ENCODE measurements at regions of chrX and their contacts with region 1.

Region 1: GRCh38 chrX:11439846-11440245 is 146.6 kb downstream of the AMELX start:
- DNase-seq: no peak
- ATAC-seq: no peak
- H3K4me3 ChIP-seq: no peak overlapping the region
- H3K27ac ChIP-seq: no peak overlapping the region
- H3K4me1 ChIP-seq: no peaks in the 10 kb centered on the region
- H3K27me3 ChIP-seq: no peaks in the 10 kb centered on the region
- CTCF ChIP-seq: no peak
- EP300 ChIP-seq: no peak
- POLR2A ChIP-seq: no peak
- RAD21 ChIP-seq: no peak

Region 2: DNA sequence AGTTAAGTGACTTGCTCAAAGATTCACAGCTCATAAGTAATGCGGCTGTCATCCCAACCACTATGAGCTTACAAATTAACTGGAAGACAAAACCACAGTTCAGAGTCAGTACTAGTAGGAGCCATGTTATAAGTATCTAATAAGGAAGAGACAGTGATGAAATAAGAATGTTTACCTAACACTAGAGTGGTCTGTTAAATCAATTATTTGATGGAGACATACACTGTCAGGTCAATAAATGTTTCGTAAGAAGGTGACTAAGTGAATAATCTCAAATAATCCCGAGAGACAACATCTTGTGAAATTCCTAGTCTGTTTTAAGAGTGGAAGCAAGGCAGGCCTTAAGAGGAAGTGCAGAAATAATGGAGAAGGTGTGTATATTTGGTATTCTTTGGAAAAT is 172.4 kb before region 1 on chrX:
- CTCF ChIA-PET with region 1: no interaction called
- POLR2A ChIA-PET with region 1: no interaction called
- RAD21 ChIA-PET with region 1: no interaction called
- SMC1A ChIA-PET with region 1: no interaction called
- in situ Hi-C with region 1: no loop called
- intact Hi-C with region 1: loop called (anchors 5 kb)
- DNase-seq: no peak
- ATAC-seq: no peak
- H3K4me3 ChIP-seq: no peak overlapping the region
- H3K27ac ChIP-seq: no peak overlapping the region
- H3K4me1 ChIP-seq: no peaks in the 10 kb centered on the region
- H3K27me3 ChIP-seq: no peaks in the 10 kb centered on the region; a peak in 1 of 4 replicates
- CTCF ChIP-seq: no peak
- EP300 ChIP-seq: no peak
- POLR2A ChIP-seq: no peak
- RAD21 ChIP-seq: no peak